T-cell (primary cell): ENCODE measurements at regions of chr1 and their contacts with region 1.

Region 1: GRCh38 chr1:185214436-185215140 is 57.6 kb downstream of the SWT1 start:
- DNase-seq: no peak
- ATAC-seq: no peak
- H3K4me3 ChIP-seq: no peak overlapping the region
- H3K4me3 Mint-ChIP-seq: no peak overlapping the region
- H3K27ac ChIP-seq: no peak overlapping the region
- H3K27ac Mint-ChIP-seq: no peak overlapping the region
- H3K4me1 ChIP-seq: no peaks in the 10 kb centered on the region
- H3K4me1 Mint-ChIP-seq: no peaks in the 10 kb centered on the region
- H3K27me3 ChIP-seq: no peaks in the 10 kb centered on the region
- H3K27me3 Mint-ChIP-seq: no peaks in the 10 kb centered on the region

Region 2: GRCh38 chr1:184075055-184076029 is 1139.2 kb before region 1 on chr1:
- CTCF ChIA-PET with region 1: no interaction called
- POLR2A ChIA-PET with region 1: no interaction called
- DNase-seq: peak in 3 of 35 experiments; percentile 5 to 56 (median 8)
- ATAC-seq: peak in 1 of 4 experiments; percentile 38
- H3K4me3 ChIP-seq: no peak overlapping the region
- H3K4me3 Mint-ChIP-seq: no peak overlapping the region
- H3K27ac ChIP-seq: no peak overlapping the region
- H3K27ac Mint-ChIP-seq: peak overlapping the region in 1 of 2 donors; percentile 61
- H3K4me1 ChIP-seq: no peaks in the 10 kb centered on the region
- H3K4me1 Mint-ChIP-seq: peaks cover 0 to 4% (median 0%) of the 10 kb centered on the region in 3 donors
- H3K27me3 ChIP-seq: no peaks in the 10 kb centered on the region
- H3K27me3 Mint-ChIP-seq: no peaks in the 10 kb centered on the region

Region 3: DNA sequence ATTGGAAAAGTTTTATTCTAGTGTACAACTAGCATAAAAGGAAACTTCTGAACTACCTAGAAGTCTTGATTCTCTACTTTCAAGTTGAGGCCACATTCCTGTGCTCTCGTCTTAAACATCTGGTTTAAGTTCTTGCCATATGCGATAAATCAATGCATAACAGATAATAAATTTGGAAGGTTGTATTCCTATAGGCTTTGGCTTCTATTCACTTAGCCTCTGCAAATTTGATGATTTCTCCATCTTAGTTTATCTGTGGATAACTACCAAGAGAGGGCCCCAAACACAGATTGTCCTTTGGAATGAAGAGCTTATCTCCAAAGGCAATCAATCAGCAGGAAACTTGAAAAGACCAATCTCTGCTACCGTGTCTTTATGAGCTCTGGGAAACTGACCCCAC is 180.9 kb before region 1 on chr1:
- CTCF ChIA-PET with region 1: no interaction called
- POLR2A ChIA-PET with region 1: no interaction called
- DNase-seq: no peak
- ATAC-seq: no peak
- H3K4me3 ChIP-seq: no peak overlapping the region
- H3K4me3 Mint-ChIP-seq: no peak overlapping the region
- H3K27ac ChIP-seq: no peak overlapping the region
- H3K27ac Mint-ChIP-seq: no peak overlapping the region
- H3K4me1 ChIP-seq: no peaks in the 10 kb centered on the region
- H3K4me1 Mint-ChIP-seq: no peaks in the 10 kb centered on the region
- H3K27me3 ChIP-seq: peaks cover 0 to 4% of the 10 kb centered on the region in 2 experiments
- H3K27me3 Mint-ChIP-seq: peaks cover 5 to 6% of the 10 kb centered on the region in 2 donors

Region 4: DNA sequence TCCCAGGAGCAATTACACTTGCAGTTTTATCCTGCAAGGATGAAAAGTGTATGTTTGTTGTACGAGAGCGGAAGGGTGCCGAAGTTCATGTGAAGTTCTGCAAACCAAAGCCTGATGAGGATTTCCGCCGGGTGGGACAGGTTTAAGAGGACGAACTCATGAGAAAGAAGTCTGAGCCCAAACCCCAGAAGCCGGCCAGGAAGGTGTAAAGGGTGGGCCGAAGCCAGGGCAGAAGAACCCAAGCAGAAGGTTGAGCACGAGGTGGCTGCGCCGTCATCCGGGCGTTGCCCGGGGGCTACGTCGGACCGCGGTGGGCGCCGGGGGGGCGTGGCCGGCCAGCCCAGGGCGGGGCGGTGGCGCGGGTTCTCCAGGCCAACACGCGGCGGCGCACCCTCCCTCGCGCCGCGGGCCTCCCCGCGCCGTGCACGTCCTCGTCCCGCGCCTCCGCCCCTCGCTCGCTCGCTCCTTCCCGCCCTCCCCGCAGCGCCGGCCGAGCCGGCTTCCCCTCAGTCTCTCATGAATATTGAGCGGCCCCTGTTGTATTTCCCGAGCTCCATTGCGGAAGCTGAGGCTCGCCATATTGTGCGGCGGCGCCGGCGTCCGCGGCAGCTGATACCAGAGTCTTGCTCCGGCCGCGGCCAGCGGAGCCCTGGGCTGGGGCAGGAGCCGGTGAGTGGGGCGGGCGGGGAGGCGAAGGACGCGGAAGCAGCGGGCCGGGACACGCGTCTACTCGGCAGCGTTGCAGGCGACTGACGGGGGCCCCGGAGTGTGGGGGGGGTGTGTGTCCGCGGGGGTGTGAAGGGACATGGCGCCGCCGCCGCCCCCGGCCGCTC is 169.4 kb before region 1 on chr1 and contains the start of gene RNF2:
- CTCF ChIA-PET with region 1: no interaction called
- POLR2A ChIA-PET with region 1: interaction called in 1 of 2 experiments, 12 read pairs
- DNase-seq: peak; percentile 65 to 90 (median 79)
- ATAC-seq: peak; percentile 90 to 95 (median 92)
- H3K4me3 ChIP-seq: peak within 1 kb of the TSS; percentile 61 to 76
- H3K4me3 Mint-ChIP-seq: peak within 1 kb of the TSS; percentile 93 to 98 (median 94)
- H3K27ac ChIP-seq: peak within 1 kb of the TSS; percentile 81
- H3K27ac Mint-ChIP-seq: peak within 1 kb of the TSS; percentile 93 to 96
- H3K4me1 ChIP-seq: peaks cover 9 to 10% of the 10 kb centered on the region in 2 experiments
- H3K4me1 Mint-ChIP-seq: peaks cover 49 to 52% (median 50%) of the 10 kb centered on the region in 3 donors
- H3K27me3 ChIP-seq: no peaks in the 10 kb centered on the region
- H3K27me3 Mint-ChIP-seq: no peaks in the 10 kb centered on the region
- total RNA-seq, gene RNF2: 17.0 to 24.0 (median 21.0) TPM

Region 5: DNA sequence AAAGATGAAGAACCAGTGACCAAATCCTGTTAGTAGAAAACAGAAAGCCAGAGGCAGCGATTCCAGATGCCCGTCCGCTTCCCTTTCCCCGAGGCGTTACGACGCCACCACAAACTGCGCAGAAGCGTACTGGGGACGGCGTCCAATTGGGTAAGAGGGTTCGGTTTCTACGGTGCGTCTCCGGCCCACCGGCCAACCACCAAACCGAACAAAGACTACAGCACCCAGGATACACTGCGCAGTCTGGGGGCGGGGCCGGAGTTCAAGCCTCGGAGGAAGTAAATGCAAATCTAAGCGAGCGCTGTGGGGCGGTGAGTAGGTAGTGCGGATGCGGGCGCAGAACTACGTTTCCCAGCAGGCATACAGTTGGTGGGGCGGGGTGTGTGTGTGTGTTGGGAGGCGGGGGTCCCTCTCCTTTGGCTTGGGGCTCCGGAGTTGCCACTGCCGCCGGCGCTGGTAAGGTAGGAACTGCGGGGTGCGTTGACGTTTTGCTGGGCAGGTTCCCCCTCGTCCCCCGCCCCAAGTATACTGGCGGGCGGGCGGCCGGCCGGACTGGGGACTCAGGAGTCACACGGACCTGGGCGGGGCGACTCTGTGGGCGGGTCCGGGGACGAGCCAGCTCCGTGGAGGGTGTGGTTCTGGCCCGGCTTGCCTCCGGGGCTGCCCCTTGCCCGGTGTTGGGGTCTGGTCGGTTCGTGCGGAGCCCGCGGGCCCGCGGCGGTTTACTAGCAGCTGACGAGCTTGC is 57.6 kb before region 1 on chr1 and contains the starts of genes SWT1 and TRMT1L:
- CTCF ChIA-PET with region 1: no interaction called
- POLR2A ChIA-PET with region 1: no interaction called
- DNase-seq: peak; percentile 95 to 99 (median 97)
- ATAC-seq: peak; percentile 91 to 94 (median 91)
- H3K4me3 ChIP-seq: peak within 1 kb of the TSS; percentile 97 to 99
- H3K4me3 Mint-ChIP-seq: peak within 1 kb of the TSS; percentile 98 to 100 (median 98)
- H3K27ac ChIP-seq: peak within 1 kb of the TSS; percentile 99
- H3K27ac Mint-ChIP-seq: peak within 1 kb of the TSS; percentile 97 to 99
- H3K4me1 ChIP-seq: peaks cover 11 to 25% of the 10 kb centered on the region in 2 experiments
- H3K4me1 Mint-ChIP-seq: peaks cover 50 to 53% (median 53%) of the 10 kb centered on the region in 3 donors
- H3K27me3 ChIP-seq: no peaks in the 10 kb centered on the region
- H3K27me3 Mint-ChIP-seq: no peaks in the 10 kb centered on the region
- total RNA-seq, gene SWT1: 6.4 to 9.8 (median 8.5) TPM
- total RNA-seq, gene TRMT1L: 6.2 to 23.4 (median 22.1) TPM